Prostate gland (tissue), 2 donors: ENCODE measurements at regions of chr13 and their contacts with region 1.

Region 1: GRCh38 chr13:111474136-111475002 is 153.9 kb downstream of the TEX29 start:
- DNase-seq: no peak
- H3K4me3 ChIP-seq: no peak overlapping the region
- H3K27ac ChIP-seq: no peak overlapping the region
- H3K4me1 ChIP-seq: no peaks in the 10 kb centered on the region
- H3K27me3 ChIP-seq: no peaks in the 10 kb centered on the region
- CTCF ChIP-seq: peak in 3 of 4 experiments; percentile 43 to 72 (median 58)
- POLR2A ChIP-seq: no peak

Region 2: DNA sequence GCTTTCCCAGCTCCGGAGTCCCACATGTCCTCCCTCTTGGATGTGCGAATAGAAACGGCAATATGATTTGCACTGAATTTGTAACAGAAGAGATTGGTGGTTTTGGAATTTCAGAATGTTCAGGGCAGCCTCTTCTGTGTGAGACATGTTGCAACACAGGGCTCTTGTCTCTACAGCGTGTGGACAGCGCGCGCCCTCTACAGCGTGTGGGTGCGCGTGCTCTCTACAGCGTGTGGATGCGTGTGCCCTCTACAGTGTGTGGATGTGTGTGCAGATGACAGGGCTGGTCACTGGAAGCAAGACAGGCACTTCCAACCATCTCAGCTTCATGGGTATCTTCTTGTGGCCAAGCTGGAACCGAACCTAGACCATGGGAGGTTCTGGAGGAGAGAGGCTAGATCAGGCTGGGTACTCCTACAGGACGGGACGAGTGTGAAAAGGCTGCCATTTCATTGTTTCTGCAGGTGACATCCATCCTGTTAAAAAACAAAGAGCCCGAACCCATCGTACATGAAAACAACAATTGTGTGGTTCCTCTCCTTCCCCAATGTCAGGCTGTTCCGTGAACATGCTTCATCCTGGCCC is 75.6 kb before region 1 on chr13:
- intact Hi-C with region 1: no loop called
- DNase-seq: no peak
- H3K4me3 ChIP-seq: no peak overlapping the region
- H3K27ac ChIP-seq: no peak overlapping the region
- H3K4me1 ChIP-seq: no peaks in the 10 kb centered on the region
- H3K27me3 ChIP-seq: no peaks in the 10 kb centered on the region
- CTCF ChIP-seq: no peak
- POLR2A ChIP-seq: no peak

Region 3: GRCh38 chr13:111429064-111429558 is 45.3 kb before region 1 on chr13:
- intact Hi-C with region 1: no loop called
- DNase-seq: no peak
- H3K4me3 ChIP-seq: no peak overlapping the region
- H3K27ac ChIP-seq: no peak overlapping the region
- H3K4me1 ChIP-seq: no peaks in the 10 kb centered on the region
- H3K27me3 ChIP-seq: no peaks in the 10 kb centered on the region
- CTCF ChIP-seq: peak in 2 of 4 experiments; percentile 16 to 49
- POLR2A ChIP-seq: no peak

Region 4: GRCh38 chr13:112443995-112444860 is 969.9 kb after region 1 on chr13:
- intact Hi-C with region 1: loop called (anchors 2 kb)
- DNase-seq: peak; percentile 36
- H3K4me3 ChIP-seq: no peak overlapping the region
- H3K27ac ChIP-seq: no peak overlapping the region
- H3K4me1 ChIP-seq: no peaks in the 10 kb centered on the region
- H3K27me3 ChIP-seq: peaks cover 12% of the 10 kb centered on the region
- CTCF ChIP-seq: peak; percentile 56 to 80 (median 72)
- POLR2A ChIP-seq: no peak

Region 5: DNA sequence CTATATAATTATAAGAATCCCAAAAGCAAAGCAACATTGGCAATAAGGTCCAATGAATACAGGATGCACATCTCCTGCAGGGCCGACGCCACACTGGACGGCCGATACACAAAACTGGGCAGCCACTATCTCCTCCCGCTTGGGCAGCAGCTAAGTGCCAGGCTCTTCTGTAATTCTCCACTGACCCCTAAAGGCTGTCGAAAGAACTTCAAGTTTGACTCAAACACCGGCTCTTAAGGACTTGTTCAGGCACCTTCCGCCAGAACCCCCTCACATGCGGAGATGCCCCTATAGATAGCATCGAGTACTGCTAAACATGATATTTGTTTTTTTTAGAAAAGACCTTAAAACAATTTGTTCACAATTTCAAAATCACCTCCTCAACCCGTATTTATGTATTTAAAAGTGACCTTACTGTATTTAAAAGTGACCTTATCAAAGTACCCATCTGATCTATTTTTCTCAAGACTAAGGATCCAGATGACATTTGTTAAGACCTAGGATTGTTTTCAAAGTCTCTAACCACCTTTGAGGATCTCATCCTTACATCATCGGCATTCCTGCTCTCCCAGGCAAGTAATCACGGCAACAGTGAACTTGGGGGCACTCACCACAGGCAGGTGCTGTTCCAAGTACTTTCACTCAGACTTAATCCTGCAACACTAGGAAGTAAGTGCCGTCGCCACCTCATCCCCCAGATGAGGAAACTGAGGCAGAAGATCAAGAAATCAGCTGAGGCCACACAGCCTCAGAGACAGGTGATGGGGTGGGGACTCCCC is 1035.8 kb after region 1 on chr13:
- intact Hi-C with region 1: loop called (anchors 5 kb)
- DNase-seq: peak; percentile 15
- H3K4me3 ChIP-seq: no peak overlapping the region
- H3K27ac ChIP-seq: no peak overlapping the region
- H3K4me1 ChIP-seq: no peaks in the 10 kb centered on the region
- H3K27me3 ChIP-seq: no peaks in the 10 kb centered on the region
- CTCF ChIP-seq: peak in 3 of 4 experiments; percentile 42 to 53 (median 43)
- POLR2A ChIP-seq: no peak

Region 6: GRCh38 chr13:112606109-112607001 is 1132.0 kb after region 1 on chr13:
- intact Hi-C with region 1: loop called (anchors 2 kb)
- DNase-seq: peak; percentile 89
- H3K4me3 ChIP-seq: peak overlapping the region; percentile 31 to 32
- H3K27ac ChIP-seq: peak overlapping the region; percentile 36 to 50
- H3K4me1 ChIP-seq: no peaks in the 10 kb centered on the region
- H3K27me3 ChIP-seq: no peaks in the 10 kb centered on the region
- CTCF ChIP-seq: peak; percentile 75 to 97 (median 92)
- POLR2A ChIP-seq: peak; percentile 34